AG04450 (cell line): ENCODE measurements at regions of chr6 and their contacts with region 1.

Region 1: GRCh38 chr6:158686791-158687381 is 37.0 kb downstream of the SYTL3 start:
- DNase-seq: no peak
- H3K4me3 ChIP-seq: no peak overlapping the region
- H3K27ac ChIP-seq: no peak overlapping the region
- H3K27me3 ChIP-seq: no peaks in the 10 kb centered on the region
- CTCF ChIP-seq: no peak

Region 2: GRCh38 chr6:158629367-158630221 is 57.3 kb before region 1 on chr6:
- CTCF ChIA-PET with region 1: interaction called, 10 read pairs
- POLR2A ChIA-PET with region 1: no interaction called
- DNase-seq: no peak
- H3K4me3 ChIP-seq: no peak overlapping the region
- H3K27ac ChIP-seq: peak overlapping the region; percentile 21
- H3K27me3 ChIP-seq: no peaks in the 10 kb centered on the region
- CTCF ChIP-seq: no peak

Region 3: GRCh38 chr6:158649289-158650143 is 37.4 kb before region 1 on chr6 and contains the start of gene SYTL3:
- CTCF ChIA-PET with region 1: interaction called, 28 read pairs
- POLR2A ChIA-PET with region 1: interaction called, 3 read pairs
- DNase-seq: no peak
- H3K4me3 ChIP-seq: no peak within 1 kb of the TSS
- H3K27ac ChIP-seq: peak within 1 kb of the TSS; percentile 89
- H3K27me3 ChIP-seq: no peaks in the 10 kb centered on the region
- CTCF ChIP-seq: no peak
- polyA plus RNA-seq, gene SYTL3: 1.6 TPM in 2 replicates

Region 4: DNA sequence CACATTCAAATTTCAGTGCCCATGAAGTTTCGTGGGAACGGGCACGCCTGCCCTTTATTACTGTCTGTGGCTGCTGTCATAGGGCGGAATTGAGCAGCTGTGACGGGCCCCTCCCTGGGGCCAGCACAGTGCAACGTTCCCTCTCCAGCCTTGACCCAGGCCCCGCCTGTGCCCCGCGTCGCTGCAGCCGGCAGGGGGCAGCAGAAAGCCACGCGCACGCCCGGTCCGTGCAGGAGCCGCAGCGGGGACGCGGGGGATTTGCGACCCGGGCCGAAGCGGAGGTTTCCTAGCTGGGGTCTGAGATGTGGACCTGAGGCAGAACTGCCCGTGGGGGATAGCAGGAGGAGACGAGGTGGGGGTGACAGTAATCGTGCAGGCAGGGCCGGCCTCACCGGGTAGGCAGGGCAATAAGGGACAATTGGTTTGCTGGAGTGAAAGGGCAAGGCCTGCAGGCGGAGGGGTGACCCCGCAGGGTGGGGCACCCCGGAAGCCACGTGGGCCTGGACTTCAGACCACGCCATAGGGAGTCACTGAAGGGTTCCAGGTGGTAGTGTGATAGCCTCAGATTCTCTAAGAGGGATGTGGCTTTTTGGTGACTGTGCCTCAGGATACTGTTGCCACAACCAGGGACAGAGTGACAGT is 17.4 kb after region 1 on chr6:
- CTCF ChIA-PET with region 1: interaction called, 13 read pairs
- POLR2A ChIA-PET with region 1: no interaction called
- DNase-seq: no peak
- H3K4me3 ChIP-seq: peak overlapping the region; percentile 61
- H3K27ac ChIP-seq: no peak overlapping the region
- H3K27me3 ChIP-seq: no peaks in the 10 kb centered on the region
- CTCF ChIP-seq: peak; percentile 94

Region 5: GRCh38 chr6:158972241-158973233 is 285.7 kb after region 1 on chr6:
- CTCF ChIA-PET with region 1: interaction called, 26 read pairs
- POLR2A ChIA-PET with region 1: no interaction called
- DNase-seq: peak; percentile 11
- H3K4me3 ChIP-seq: no peak overlapping the region
- H3K27ac ChIP-seq: no peak overlapping the region
- H3K27me3 ChIP-seq: no peaks in the 10 kb centered on the region
- CTCF ChIP-seq: peak; percentile 53